Upper lobe of right lung (tissue), 1 donor: ENCODE measurements at regions of chr11 and their contacts with region 1.

Region 1: GRCh38 chr11:36672813-36673450 is 74.9 kb upstream of the RAG2 start:
- DNase-seq: no peak
- ATAC-seq: no peak
- H3K4me3 ChIP-seq: no peak overlapping the region
- H3K27ac ChIP-seq: no peak overlapping the region
- H3K4me1 ChIP-seq: no peaks in the 10 kb centered on the region
- H3K27me3 ChIP-seq: no peaks in the 10 kb centered on the region
- CTCF ChIP-seq: peak; percentile 94

Region 2: DNA sequence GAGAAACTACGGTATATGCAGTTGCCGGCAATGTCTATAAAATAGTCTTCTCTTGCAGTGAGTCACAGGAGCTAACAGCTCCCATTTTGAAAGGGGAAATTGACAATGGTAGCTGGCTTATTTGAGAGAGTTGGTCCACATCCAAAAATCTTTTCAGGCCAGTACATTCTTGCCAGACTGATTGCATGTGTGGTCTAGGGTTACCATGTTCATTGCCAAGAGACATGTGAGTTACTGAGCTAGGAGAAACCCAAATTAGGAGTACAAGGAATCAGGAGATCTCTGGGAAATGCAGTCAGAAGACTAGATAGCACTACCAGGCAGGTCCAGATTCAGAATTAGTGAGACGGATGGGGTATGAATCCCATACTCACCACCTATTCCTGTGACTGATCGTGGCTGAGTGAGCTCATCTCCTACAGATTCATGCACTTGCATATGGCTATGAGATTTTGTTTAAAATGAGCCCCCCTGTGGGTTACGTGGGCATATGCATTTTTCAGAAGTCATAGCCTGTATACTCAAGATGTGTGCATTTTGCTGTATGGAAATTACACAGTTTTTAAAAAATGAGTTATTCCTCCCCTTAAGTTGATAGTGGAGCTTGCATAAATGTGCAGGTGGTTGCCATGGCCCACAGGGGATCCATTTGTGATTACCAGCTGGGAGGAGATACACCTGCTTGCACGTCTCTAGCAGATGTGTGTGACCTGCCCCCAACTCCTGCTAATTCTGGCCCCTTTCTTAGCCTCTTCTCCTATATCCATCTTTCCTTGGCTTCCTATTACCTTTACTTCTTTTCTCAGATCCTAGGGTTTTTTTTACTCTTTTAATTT is 486.4 kb before region 1 on chr11:
- intact Hi-C with region 1: no loop called
- DNase-seq: no peak
- ATAC-seq: peak; percentile 29
- H3K4me3 ChIP-seq: no peak overlapping the region
- H3K27ac ChIP-seq: no peak overlapping the region
- H3K4me1 ChIP-seq: no peaks in the 10 kb centered on the region
- H3K27me3 ChIP-seq: no peaks in the 10 kb centered on the region
- CTCF ChIP-seq: no peak

Region 3: GRCh38 chr11:36564376-36565030 is 108.4 kb before region 1 on chr11:
- intact Hi-C with region 1: loop called (anchors 5 kb)
- DNase-seq: no peak
- ATAC-seq: peak; percentile 75
- H3K4me3 ChIP-seq: peak overlapping the region; percentile 41
- H3K27ac ChIP-seq: no peak overlapping the region
- H3K4me1 ChIP-seq: no peaks in the 10 kb centered on the region
- H3K27me3 ChIP-seq: no peaks in the 10 kb centered on the region
- CTCF ChIP-seq: peak; percentile 75